MCF 10A (cell line): ENCODE measurements at regions of chr1 and their contacts with region 1.

Region 1: GRCh38 chr1:209207701-209208286 is 375.7 kb upstream of the CAMK1G start:
- DNase-seq: peak; percentile 83
- H3K4me3 Mint-ChIP-seq: peak overlapping the region; percentile 62
- H3K27ac Mint-ChIP-seq: no peak overlapping the region
- H3K4me1 Mint-ChIP-seq: no peaks in the 10 kb centered on the region
- H3K27me3 Mint-ChIP-seq: peaks cover 6% of the 10 kb centered on the region
- CTCF ChIP-seq: peak; percentile 98

Region 2: DNA sequence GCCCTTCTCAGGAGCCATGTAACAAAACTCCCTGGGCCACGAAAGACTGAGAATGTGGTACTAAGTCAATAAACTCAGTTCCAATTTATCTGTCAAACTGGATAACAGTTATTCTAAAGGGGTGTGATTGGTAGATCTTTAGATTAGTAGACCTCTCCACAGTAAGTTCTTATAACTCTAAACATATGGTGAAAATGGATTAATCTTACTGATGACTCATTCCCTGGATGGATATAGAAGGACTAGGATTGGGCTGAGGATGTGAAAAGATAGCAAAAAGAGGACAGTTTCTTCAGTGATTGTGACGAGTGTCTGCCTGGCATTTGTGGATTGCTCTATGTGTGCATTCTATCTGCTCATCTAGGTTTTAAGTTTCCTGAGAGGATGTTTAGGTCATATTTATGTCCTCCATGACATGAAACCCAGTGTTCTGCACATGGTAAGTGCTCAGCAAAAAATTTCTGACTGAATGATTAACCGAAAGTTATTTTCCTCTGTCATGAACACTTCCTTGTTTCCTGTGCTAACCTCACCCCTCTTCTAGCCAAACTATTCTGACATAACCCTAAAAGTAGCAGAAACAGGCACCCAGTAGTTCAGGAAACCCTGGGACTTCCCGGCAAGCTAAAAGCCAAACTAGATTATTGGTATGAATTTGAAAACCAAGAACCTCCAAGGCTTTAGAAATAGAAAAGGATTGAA is 566.1 kb before region 1 on chr1:
- CTCF ChIA-PET with region 1: interaction called, 17 read pairs
- POLR2A ChIA-PET with region 1: no interaction called
- intact Hi-C with region 1: no loop called
- DNase-seq: no peak
- H3K4me3 Mint-ChIP-seq: no peak overlapping the region
- H3K27ac Mint-ChIP-seq: no peak overlapping the region
- H3K4me1 Mint-ChIP-seq: no peaks in the 10 kb centered on the region
- H3K27me3 Mint-ChIP-seq: peaks cover 27% of the 10 kb centered on the region
- CTCF ChIP-seq: no peak

Region 3: GRCh38 chr1:209168204-209168603 is 39.6 kb before region 1 on chr1:
- CTCF ChIA-PET with region 1: interaction called, 32 read pairs
- POLR2A ChIA-PET with region 1: interaction called, 6 read pairs
- intact Hi-C with region 1: no loop called
- DNase-seq: peak; percentile 99
- H3K4me3 Mint-ChIP-seq: peak overlapping the region; percentile 0
- H3K27ac Mint-ChIP-seq: peak overlapping the region; percentile 0
- H3K4me1 Mint-ChIP-seq: peaks cover 28% of the 10 kb centered on the region
- H3K27me3 Mint-ChIP-seq: no peaks in the 10 kb centered on the region
- CTCF ChIP-seq: no peak

Region 4: GRCh38 chr1:209229494-209230059 is 21.8 kb after region 1 on chr1:
- CTCF ChIA-PET with region 1: interaction called, 49 read pairs
- POLR2A ChIA-PET with region 1: interaction called, 8 read pairs
- intact Hi-C with region 1: no loop called
- DNase-seq: peak; percentile 87
- H3K4me3 Mint-ChIP-seq: no peak overlapping the region
- H3K27ac Mint-ChIP-seq: no peak overlapping the region
- H3K4me1 Mint-ChIP-seq: peaks cover 13% of the 10 kb centered on the region
- H3K27me3 Mint-ChIP-seq: no peaks in the 10 kb centered on the region
- CTCF ChIP-seq: no peak

Region 5: GRCh38 chr1:209335178-209335577 is 127.4 kb after region 1 on chr1:
- CTCF ChIA-PET with region 1: interaction called, 11 read pairs
- POLR2A ChIA-PET with region 1: no interaction called
- intact Hi-C with region 1: no loop called
- DNase-seq: peak; percentile 75
- H3K4me3 Mint-ChIP-seq: no peak overlapping the region
- H3K27ac Mint-ChIP-seq: no peak overlapping the region
- H3K4me1 Mint-ChIP-seq: peaks cover 5% of the 10 kb centered on the region
- H3K27me3 Mint-ChIP-seq: no peaks in the 10 kb centered on the region
- CTCF ChIP-seq: peak; percentile 96

Region 6: GRCh38 chr1:209455145-209455544 is 247.4 kb after region 1 on chr1:
- CTCF ChIA-PET with region 1: interaction called, 10 read pairs
- POLR2A ChIA-PET with region 1: no interaction called
- intact Hi-C with region 1: no loop called
- DNase-seq: peak; percentile 44
- H3K4me3 Mint-ChIP-seq: no peak overlapping the region
- H3K27ac Mint-ChIP-seq: no peak overlapping the region
- H3K4me1 Mint-ChIP-seq: peaks cover 32% of the 10 kb centered on the region
- H3K27me3 Mint-ChIP-seq: peaks cover 25% of the 10 kb centered on the region
- CTCF ChIP-seq: no peak

Region 7: DNA sequence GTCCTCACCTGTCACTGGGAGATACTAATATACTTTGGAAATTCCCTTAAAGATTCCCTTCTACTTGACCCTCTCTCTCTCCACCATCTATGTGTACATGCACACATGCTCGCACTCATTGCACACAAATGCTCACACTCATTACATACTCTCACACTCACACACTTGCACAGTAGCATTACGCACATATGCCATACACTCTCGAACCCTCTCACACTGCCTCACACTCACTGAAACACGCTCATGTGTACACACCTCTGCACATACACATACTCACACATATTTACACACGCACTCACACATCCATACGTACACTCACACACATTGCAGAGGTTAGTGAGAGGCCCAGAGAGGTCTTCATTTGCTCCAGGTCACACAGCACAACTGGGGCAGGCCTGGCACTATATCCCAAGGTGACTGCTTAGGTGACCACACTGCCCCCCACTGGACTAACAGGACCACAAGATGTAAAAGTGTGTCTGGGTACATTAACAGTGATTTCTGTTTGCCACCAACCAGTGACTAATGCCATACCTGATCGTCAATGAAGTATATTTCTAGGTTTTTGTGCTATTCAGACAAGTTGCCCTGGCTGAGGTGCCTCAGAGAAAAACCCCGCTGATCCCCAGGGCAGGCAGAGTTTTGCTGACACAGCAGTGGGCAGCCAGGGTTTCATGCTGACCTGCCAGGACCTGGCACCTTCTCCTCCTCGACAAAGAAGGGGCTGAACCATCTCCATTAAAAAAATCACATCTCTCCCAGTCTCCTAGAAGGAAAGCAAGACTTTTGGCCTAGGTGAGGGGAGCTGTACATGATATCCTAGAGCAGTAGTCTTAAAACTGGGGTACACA is 347.2 kb after region 1 on chr1:
- CTCF ChIA-PET with region 1: interaction called, 10 read pairs
- POLR2A ChIA-PET with region 1: no interaction called
- intact Hi-C with region 1: no loop called
- DNase-seq: no peak
- H3K4me3 Mint-ChIP-seq: no peak overlapping the region
- H3K27ac Mint-ChIP-seq: no peak overlapping the region
- H3K4me1 Mint-ChIP-seq: peaks cover 13% of the 10 kb centered on the region
- H3K27me3 Mint-ChIP-seq: no peaks in the 10 kb centered on the region
- CTCF ChIP-seq: peak; percentile 23